Dendritic cell treated with granulocyte-macrophage colony-stimulating factor and Interleukin-4, amounts not matched to agents 40 ng/mL and 50 ng/mL, for 4 days (primary cell): ENCODE measurements at regions of chr17 and their contacts with region 1.

Region 1: GRCh38 chr17:31299624-31300023 is 2.6 kb upstream of the OMG start:
- H3K4me3 Mint-ChIP-seq: no peak overlapping the region
- H3K27ac Mint-ChIP-seq: no peak overlapping the region
- H3K4me1 Mint-ChIP-seq: peaks cover 7% of the 10 kb centered on the region
- H3K27me3 Mint-ChIP-seq: no peaks in the 10 kb centered on the region

Region 2: DNA sequence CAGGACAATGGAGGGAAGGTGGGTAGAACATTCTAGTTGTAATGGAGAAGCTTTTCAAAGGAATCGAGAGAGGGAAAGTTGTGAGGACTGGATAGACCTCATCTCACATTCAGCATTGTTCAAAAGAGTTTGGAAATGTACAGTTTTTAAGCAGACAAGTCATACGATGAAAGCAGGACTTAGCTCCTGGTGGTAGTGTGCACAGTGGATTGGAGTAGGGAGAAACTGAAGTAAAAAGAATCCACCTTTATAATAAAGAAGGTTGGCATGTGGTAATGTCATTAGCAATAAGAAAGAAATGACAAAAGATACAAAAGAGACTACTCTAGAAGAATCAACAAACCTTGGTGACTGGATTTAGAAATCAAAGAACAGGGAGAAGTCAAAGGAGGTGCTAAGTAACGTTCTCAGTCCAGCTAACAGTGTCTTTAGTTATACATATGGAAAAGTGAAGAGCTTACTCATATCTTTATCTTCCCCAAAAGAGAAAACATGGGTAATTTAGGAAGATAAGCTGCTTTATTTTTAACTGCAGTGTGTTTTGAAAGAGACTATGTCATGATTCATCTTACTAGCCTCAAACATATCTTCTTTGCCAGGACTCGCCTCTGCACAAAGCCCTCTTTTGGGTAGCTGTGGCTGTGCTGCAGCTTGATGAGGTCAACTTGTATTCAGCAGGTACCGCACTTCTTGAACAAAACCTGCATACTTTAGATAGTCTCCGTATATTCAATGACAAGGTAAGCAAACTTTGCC is 40.5 kb after region 1 on chr17:
- intact Hi-C with region 1: loop called (anchors 5 kb)
- H3K4me3 Mint-ChIP-seq: no peak overlapping the region
- H3K27ac Mint-ChIP-seq: no peak overlapping the region
- H3K4me1 Mint-ChIP-seq: peaks cover 11% of the 10 kb centered on the region
- H3K27me3 Mint-ChIP-seq: no peaks in the 10 kb centered on the region